Activated T-helper 1 cell treated with anti-CD3 and anti-CD28 coated beads, Interleukin-12 subunit alpha, Interleukin-12 subunit beta, Interleukin-2, Interleukin-4 antibody, amounts not matched to agents 30 ng/mL and 10 ng/mL and 1 ng/mL, durations not matched to agents 14 hours and 24 hours and 36 hours (primary cell): ENCODE measurements at regions of chr7 and their contacts with region 1.

Region 1: DNA sequence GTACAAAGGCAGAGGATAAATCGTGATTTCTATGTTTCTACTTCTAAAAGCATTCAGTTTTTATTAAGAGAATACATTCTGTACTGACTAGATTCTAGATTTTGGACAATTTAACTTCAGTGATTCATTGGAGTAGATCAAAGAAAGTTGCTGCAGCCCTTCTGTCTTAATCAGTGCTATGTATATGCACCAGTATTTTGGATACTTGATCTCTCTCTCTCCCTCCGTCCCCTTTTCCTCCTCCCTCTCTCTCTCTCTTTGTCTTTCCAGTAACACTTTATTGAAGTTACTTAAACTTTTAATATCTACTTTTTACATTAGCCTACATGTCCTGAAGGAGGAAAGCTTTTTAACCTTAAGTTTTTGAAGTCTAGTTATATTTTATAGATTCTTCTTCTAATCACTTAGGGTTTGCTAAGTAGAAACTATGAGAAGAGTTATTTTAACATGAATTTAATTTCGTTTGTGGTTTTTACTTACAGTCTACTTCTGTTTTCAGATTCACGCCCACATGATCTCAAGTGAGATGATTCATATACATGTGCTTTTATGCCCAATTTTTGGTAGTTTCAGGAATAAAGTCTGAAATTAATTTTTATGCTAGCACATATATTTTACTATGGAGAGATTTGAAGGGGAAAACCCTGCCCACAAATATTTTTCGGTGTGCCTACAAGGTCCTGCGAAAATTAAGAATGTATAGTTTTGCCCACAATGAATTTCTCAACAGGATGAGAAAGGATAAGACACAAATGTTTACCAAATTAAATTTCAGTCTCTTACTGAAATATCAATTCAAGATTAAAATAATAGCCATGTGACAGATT is 9.1 kb downstream of the MDFIC start:
- DNase-seq: no peak
- H3K4me3 Mint-ChIP-seq: peak overlapping the region; percentile 75
- H3K27ac Mint-ChIP-seq: no peak overlapping the region
- H3K4me1 Mint-ChIP-seq: peaks cover 36% of the 10 kb centered on the region
- H3K27me3 Mint-ChIP-seq: no peaks in the 10 kb centered on the region

Region 2: DNA sequence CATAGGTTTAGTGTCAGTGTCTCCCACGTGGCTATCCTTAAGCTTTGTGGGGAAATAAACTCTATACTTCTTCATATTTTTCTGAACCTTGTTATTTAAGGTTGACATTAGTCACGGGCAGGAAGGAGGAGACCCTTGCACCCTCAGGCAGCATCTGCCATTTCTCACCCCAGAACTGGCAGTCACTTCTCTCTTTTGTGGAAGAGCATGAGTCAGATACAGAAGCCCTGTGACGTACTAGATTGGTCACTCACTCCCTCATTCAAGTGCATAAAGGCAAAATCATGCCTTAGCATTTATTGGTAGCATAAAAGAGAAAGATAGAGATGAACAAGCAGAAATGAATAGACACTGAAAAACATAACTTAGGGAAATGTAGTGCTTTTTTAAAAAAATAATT is 215.1 kb before region 1 on chr7:
- intact Hi-C with region 1: loop called (anchors 5 kb)
- DNase-seq: no peak
- H3K4me3 Mint-ChIP-seq: no peak overlapping the region
- H3K27ac Mint-ChIP-seq: no peak overlapping the region
- H3K4me1 Mint-ChIP-seq: no peaks in the 10 kb centered on the region
- H3K27me3 Mint-ChIP-seq: no peaks in the 10 kb centered on the region

Region 3: DNA sequence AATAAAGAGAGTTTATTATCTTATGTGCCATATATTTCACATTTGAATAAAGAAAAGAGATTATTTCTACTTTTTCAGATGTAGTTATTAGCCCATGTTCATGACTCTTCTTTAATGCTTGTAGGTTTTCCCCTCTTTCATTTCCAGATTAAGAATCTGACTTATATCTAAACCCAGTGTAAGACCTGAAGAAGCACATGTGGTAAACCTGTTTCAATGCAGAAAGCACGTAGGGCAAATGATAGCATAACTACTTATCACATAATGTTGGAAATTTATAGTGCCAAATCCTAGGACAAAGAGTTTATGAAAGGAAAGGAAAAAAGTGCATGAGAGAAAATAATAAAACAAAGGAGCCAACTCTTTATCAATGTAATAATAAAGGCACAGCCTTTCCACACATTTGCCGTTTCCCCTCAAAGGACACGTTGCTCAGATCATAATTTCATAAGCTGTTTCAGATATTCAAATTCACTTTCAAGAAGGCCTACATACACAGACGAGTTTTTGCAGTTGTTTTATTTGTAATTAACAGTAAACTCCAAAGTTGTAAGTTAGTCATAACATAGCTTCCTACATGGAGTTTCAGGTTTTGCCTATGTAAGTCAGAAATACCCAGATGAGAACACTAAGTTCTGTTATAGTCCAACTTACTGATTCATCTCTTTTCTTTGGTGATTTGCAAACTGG is 98.0 kb before region 1 on chr7:
- intact Hi-C with region 1: loop called (anchors 1 kb)
- DNase-seq: no peak
- H3K4me3 Mint-ChIP-seq: no peak overlapping the region
- H3K27ac Mint-ChIP-seq: peak overlapping the region; percentile 94
- H3K4me1 Mint-ChIP-seq: peaks cover 33% of the 10 kb centered on the region
- H3K27me3 Mint-ChIP-seq: no peaks in the 10 kb centered on the region

Region 4: DNA sequence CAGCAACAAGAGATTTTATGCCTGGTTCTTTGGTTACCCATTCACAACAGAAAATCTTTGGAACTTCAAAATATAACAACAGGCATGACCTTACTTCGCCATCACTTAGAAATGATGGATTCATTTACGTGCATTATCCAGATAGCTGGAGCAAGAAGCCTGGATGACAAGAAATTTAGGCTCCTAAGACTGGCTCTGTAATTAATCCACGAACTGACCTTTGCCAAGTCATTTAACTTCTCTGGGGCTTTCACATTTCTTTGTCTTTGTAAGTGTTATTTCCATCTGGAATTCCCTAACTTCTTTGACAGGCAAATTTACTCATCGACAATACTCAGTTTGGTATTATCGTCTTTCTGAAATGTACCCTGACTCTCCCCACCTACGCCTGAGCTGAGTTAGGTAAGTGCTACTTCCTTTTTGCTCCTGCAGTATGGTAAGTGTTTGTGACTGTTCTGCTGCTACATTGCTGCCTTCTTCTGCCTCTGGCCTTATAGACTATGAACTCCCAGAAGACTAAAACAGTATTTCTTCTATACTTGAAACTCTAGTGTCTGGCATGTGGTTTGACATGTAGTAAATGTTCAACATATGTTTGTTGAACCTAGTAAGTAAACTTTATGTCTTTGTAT is 14.7 kb before region 1 on chr7:
- intact Hi-C with region 1: loop called (anchors 1 kb)
- DNase-seq: no peak
- H3K4me3 Mint-ChIP-seq: peak overlapping the region; percentile 70
- H3K27ac Mint-ChIP-seq: peak overlapping the region; percentile 98
- H3K4me1 Mint-ChIP-seq: peaks cover 61% of the 10 kb centered on the region
- H3K27me3 Mint-ChIP-seq: no peaks in the 10 kb centered on the region

Region 5: GRCh38 chr7:115008465-115009114 is 77.5 kb after region 1 on chr7:
- intact Hi-C with region 1: loop called (anchors 2 kb)
- DNase-seq: no peak
- H3K4me3 Mint-ChIP-seq: peak overlapping the region; percentile 77
- H3K27ac Mint-ChIP-seq: peak overlapping the region; percentile 76
- H3K4me1 Mint-ChIP-seq: peaks cover 84% of the 10 kb centered on the region
- H3K27me3 Mint-ChIP-seq: no peaks in the 10 kb centered on the region